ENCODE measurements at regions of chr7 and their contacts with region 1.

Region 1: GRCh38 chr7:1044191-1045068 is at the start of gene GPR146:
- DNase-seq: peak; percentile 73 to 94 (median 89)
- ATAC-seq: peak; percentile 86 to 89
- H3K4me3 Mint-ChIP-seq: peak within 1 kb of the TSS; percentile 78 to 94 (median 88)
- H3K27ac Mint-ChIP-seq: peak within 1 kb of the TSS; percentile 23 to 93 (median 88)
- H3K4me1 Mint-ChIP-seq: peaks cover 25 to 71% (median 59%) of the 10 kb centered on the region in 4 donors
- H3K27me3 Mint-ChIP-seq: peaks cover 0 to 20% (median 0%) of the 10 kb centered on the region in 5 donors
- polyA plus RNA-seq, gene GPR146: 1.4 to 3.8 (median 2.5) TPM

Region 2: GRCh38 chr7:1015196-1016121 is 29.0 kb before region 1 on chr7:
- POLR2A ChIA-PET with region 1: no interaction called
- DNase-seq: peak in 1 of 10 donors; percentile 59
- ATAC-seq: no peak
- H3K4me3 Mint-ChIP-seq: no peak overlapping the region
- H3K27ac Mint-ChIP-seq: peak overlapping the region in 1 of 10 donors; percentile 7
- H3K4me1 Mint-ChIP-seq: peaks cover 10 to 36% (median 23%) of the 10 kb centered on the region in 4 donors
- H3K27me3 Mint-ChIP-seq: no peaks in the 10 kb centered on the region

Region 3: DNA sequence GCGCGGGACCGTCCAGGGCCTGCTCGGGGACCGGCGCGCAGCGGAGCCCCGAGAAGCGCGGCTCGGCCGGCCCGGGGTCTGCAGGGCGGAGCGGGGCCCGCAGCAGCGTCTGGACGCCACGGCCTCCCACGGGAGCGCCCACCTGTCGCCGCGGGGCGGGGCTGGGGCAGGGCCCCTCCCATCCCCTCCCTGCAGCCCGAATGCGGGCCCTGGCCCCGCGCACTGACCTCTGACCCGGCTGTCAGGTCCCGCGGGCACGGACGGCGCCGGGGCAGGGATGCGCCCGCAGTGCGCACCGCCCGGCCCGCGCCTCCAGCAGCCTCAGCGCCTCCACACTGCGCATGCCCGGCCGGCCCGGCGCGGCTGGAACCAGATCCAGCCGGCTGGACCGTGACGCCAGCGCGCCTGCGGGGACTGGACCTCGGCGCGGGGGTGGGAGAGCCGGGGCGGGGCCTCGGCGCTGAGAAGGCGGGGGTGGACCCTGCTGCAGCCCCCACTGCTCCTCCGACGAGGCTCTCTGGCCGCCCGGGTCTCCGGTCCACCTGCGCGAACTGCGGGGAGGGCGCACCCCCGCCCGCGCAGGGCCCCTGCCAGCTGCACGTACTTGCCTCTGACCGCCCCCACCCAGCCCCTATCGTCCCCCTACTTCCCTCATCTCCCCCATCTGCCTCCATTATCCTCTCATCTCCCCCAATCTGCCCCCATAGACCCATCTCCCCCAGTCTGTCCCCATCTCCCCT is 16.2 kb before region 1 on chr7:
- POLR2A ChIA-PET with region 1: interaction called, 35 read pairs
- DNase-seq: peak; percentile 65 to 91 (median 85)
- ATAC-seq: peak; percentile 80 to 87
- H3K4me3 Mint-ChIP-seq: peak overlapping the region in 8 of 10 donors; percentile 72 to 88 (median 82)
- H3K27ac Mint-ChIP-seq: peak overlapping the region in 7 of 10 donors; percentile 66 to 93 (median 87)
- H3K4me1 Mint-ChIP-seq: peaks cover 18 to 61% (median 49%) of the 10 kb centered on the region in 4 donors
- H3K27me3 Mint-ChIP-seq: peaks cover 0 to 2% (median 0%) of the 10 kb centered on the region in 5 donors

Region 4: DNA sequence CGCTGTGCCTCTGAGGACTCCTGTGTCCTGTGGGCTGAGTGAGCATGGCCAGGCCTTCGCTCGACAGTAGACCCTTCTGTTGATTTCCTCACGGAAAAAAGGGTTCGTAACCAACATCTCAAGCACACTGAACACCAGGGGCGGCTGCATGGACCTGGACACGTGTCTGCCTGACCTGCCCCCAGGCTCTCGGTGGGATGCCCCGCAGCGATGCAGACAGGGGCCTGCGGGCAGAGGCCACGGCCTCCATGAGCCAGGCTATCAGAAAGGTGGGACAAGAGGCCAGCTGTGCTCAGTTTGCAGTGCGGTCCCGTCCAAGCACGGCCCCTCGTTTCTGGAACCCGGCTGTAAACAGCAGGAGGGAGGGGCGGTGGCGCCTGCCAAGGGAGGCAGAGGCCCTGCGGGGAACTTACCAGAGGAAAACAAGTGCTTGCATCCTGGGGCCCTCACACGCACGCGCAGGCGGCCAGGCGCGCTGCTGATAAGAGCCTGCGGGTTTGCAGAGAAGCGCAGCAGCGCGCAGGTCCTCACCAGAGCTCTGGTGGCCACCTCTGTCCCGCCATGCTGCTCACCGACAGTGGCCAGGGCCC is 10.5 kb after region 1 on chr7:
- POLR2A ChIA-PET with region 1: interaction called, 33 read pairs
- DNase-seq: peak; percentile 27 to 82 (median 52)
- ATAC-seq: peak; percentile 90 to 92
- H3K4me3 Mint-ChIP-seq: peak overlapping the region; percentile 80 to 94 (median 88)
- H3K27ac Mint-ChIP-seq: peak overlapping the region; percentile 40 to 91 (median 76)
- H3K4me1 Mint-ChIP-seq: peaks cover 7 to 36% (median 24%) of the 10 kb centered on the region in 4 donors
- H3K27me3 Mint-ChIP-seq: no peaks in the 10 kb centered on the region

Region 5: GRCh38 chr7:1124816-1125602 is 80.6 kb after region 1 on chr7:
- POLR2A ChIA-PET with region 1: no interaction called
- DNase-seq: peak in 1 of 10 donors; percentile 59
- ATAC-seq: no peak
- H3K4me3 Mint-ChIP-seq: no peak overlapping the region
- H3K27ac Mint-ChIP-seq: peak overlapping the region in 1 of 10 donors; percentile 22
- H3K4me1 Mint-ChIP-seq: peaks cover 0 to 1% (median 0%) of the 10 kb centered on the region in 4 donors
- H3K27me3 Mint-ChIP-seq: no peaks in the 10 kb centered on the region